Caco-2 (cell line): ENCODE measurements at regions of chr10 and their contacts with region 1.

Region 1: DNA sequence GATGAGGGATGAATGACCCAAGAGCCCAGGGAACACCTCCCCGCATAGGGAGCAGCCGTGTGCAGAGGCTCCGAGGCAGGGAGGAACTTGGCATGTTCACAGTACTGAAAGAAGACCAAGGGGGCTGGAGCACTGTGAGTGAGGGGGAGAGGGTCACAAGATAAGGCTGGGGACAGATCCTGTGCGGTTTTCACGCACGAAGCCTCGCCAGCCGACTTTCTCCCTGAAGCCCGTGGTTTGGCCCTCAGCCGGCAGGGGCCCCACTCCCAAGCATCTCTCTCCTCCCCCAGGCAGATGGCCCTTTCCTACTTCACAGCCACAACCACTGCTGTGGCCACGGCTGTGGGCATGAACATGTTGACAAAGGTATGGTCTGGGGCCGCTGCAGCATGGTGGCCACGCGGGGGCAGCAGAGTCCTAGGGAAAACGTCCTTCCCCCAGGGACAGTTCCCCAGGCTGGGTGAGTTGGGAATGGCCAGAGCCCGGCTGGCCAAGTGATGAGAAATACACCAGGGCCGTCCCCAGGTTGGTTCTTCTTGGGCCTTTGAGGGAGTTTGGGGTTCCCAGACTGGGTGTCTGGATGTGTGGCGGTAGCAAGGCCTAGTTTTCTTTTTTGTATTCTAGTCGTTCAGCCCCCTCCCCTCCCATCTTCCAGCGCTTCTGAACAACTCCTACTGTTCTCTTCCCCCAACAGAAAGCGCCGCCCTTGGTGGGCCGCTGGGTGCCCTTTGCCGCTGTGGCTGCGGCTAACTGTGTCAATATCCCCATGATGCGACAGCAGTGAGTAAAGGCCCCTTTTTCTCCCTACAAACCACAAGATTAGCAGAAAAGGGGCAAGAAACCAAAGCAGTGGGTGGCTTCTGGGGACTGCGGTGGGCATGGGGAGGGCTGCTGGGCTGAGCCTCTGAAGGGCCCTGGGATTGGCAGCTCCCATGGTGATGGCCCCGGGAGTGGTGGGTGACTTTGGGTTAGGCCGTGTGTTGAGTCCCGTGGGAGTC is 14.4 kb upstream of the WBP1L start:
- DNase-seq: peak; percentile 77 to 88
- H3K4me3 ChIP-seq: no peak overlapping the region
- H3K4me3 Mint-ChIP-seq: no peak overlapping the region
- H3K27ac Mint-ChIP-seq: peak overlapping the region; percentile 5
- H3K4me1 ChIP-seq: no peaks in the 10 kb centered on the region
- H3K4me1 Mint-ChIP-seq: no peaks in the 10 kb centered on the region
- H3K27me3 ChIP-seq: no peaks in the 10 kb centered on the region
- H3K27me3 Mint-ChIP-seq: no peaks in the 10 kb centered on the region
- CTCF ChIP-seq: peak; percentile 91 to 95

Region 2: DNA sequence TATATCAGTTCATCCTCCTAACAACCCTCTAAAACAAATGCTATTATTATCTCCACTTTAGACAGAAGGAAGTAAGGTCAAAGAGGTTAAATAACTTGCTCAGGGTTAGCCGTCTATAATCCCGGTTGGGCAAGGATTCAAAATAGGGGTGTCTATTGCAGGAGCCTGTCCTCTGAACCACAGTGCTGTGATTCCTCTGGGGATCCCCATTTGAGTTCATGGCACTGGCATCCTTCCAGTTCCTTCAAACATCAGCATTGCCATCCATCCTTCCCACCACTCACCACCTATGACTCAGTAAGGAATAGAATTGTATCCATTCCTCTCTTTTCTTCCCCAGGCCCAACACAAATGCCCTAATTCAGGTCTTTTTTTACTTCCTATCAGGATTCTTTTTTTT is 638.6 kb before region 1 on chr10:
- CTCF ChIA-PET with region 1: no interaction called
- POLR2A ChIA-PET with region 1: no interaction called
- intact Hi-C with region 1: no loop called
- DNase-seq: no peak
- H3K4me3 ChIP-seq: no peak overlapping the region
- H3K4me3 Mint-ChIP-seq: no peak overlapping the region
- H3K27ac Mint-ChIP-seq: no peak overlapping the region
- H3K4me1 ChIP-seq: no peaks in the 10 kb centered on the region
- H3K4me1 Mint-ChIP-seq: no peaks in the 10 kb centered on the region
- H3K27me3 ChIP-seq: no peaks in the 10 kb centered on the region
- H3K27me3 Mint-ChIP-seq: no peaks in the 10 kb centered on the region
- CTCF ChIP-seq: no peak

Region 3: GRCh38 chr10:102691285-102692066 is 37.9 kb before region 1 on chr10:
- CTCF ChIA-PET with region 1: no interaction called
- POLR2A ChIA-PET with region 1: no interaction called
- intact Hi-C with region 1: no loop called
- DNase-seq: no peak
- H3K4me3 ChIP-seq: no peak overlapping the region
- H3K4me3 Mint-ChIP-seq: no peak overlapping the region
- H3K27ac Mint-ChIP-seq: no peak overlapping the region
- H3K4me1 ChIP-seq: no peaks in the 10 kb centered on the region
- H3K4me1 Mint-ChIP-seq: no peaks in the 10 kb centered on the region
- H3K27me3 ChIP-seq: no peaks in the 10 kb centered on the region
- H3K27me3 Mint-ChIP-seq: no peaks in the 10 kb centered on the region
- CTCF ChIP-seq: no peak

Region 4: GRCh38 chr10:102869258-102870198 is 140.2 kb after region 1 on chr10 and contains the start of gene AS3MT:
- CTCF ChIA-PET with region 1: no interaction called
- POLR2A ChIA-PET with region 1: no interaction called
- intact Hi-C with region 1: no loop called
- DNase-seq: peak; percentile 86 to 87
- H3K4me3 ChIP-seq: peak within 1 kb of the TSS; percentile 50
- H3K4me3 Mint-ChIP-seq: peak within 1 kb of the TSS; percentile 78
- H3K27ac Mint-ChIP-seq: peak within 1 kb of the TSS; percentile 40
- H3K4me1 ChIP-seq: peaks cover 6% of the 10 kb centered on the region; the same call in 1 of the 2 replicates
- H3K4me1 Mint-ChIP-seq: peaks cover 9% of the 10 kb centered on the region
- H3K27me3 ChIP-seq: no peaks in the 10 kb centered on the region
- H3K27me3 Mint-ChIP-seq: no peaks in the 10 kb centered on the region
- CTCF ChIP-seq: no peak
- total RNA-seq, gene AS3MT: 6.4 and 8.6 TPM in 2 replicates

Region 5: DNA sequence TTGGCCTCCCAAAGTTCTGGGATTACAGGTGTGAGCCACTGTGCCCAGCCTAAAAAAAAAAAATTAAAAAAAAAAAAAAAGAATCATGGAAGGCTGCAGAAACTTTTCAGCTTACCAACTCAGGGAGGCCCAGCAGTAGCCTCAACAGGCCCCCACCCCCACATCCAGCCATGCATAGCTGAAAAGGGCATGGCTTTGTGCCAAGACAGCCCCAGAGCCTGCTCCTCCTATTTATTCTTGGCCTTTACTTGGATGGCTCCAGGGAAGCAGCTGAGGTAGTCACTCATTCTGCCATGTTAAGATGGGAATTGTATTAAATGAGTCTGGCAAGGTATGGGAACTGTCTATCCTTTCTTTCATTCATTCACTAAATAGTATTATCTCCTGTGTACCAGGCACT is 175.0 kb after region 1 on chr10:
- CTCF ChIA-PET with region 1: no interaction called
- POLR2A ChIA-PET with region 1: no interaction called
- intact Hi-C with region 1: loop called (anchors 1 kb)
- DNase-seq: no peak
- H3K4me3 ChIP-seq: no peak overlapping the region
- H3K4me3 Mint-ChIP-seq: no peak overlapping the region
- H3K27ac Mint-ChIP-seq: no peak overlapping the region
- H3K4me1 ChIP-seq: no peaks in the 10 kb centered on the region
- H3K4me1 Mint-ChIP-seq: no peaks in the 10 kb centered on the region
- H3K27me3 ChIP-seq: no peaks in the 10 kb centered on the region
- H3K27me3 Mint-ChIP-seq: no peaks in the 10 kb centered on the region
- CTCF ChIP-seq: no peak

Region 6: DNA sequence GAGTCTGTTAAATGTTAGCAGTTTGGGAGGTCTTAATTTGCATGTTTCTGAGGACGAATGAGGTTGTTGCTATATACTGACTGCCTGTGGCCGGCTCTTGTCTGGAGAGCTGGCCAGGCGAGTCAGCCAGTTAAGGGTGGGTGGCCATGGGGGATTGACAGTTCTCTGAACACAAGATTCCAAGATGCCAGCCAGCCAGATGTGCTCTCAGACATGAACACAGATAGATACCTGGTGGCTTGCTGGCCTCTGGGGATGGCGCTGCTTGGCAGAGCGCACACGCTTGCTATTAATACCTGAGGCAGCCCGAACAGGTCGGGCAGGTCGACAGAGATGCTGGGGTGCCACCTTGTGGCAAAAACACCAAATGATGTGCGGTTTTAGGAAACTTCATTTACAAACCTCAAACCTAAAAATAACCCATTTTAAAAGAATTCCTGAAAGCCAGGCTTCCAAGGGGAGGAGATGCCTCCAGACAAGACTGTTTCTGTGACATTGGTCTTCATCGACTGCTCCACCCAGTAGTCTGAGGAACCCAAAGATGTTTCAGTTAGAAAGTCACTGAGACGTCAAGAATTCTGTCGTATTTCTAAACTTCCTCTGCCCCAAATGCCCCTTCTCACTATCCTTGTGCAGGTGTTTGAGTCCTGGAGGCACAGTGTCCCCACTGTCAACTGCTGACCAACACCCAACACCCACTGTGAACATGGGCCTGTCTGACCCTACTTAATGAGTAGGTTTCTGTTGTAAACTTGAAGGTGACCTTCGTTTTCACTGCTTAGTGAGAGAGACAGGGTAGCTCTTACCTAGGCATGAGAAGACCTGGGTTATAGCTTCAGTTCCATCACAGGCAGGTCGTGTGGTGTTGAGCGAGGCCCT is 340.4 kb after region 1 on chr10:
- CTCF ChIA-PET with region 1: no interaction called
- POLR2A ChIA-PET with region 1: no interaction called
- intact Hi-C with region 1: loop called (anchors 2 kb)
- DNase-seq: peak; percentile 65 to 78
- H3K4me3 ChIP-seq: no peak overlapping the region
- H3K4me3 Mint-ChIP-seq: no peak overlapping the region
- H3K27ac Mint-ChIP-seq: no peak overlapping the region
- H3K4me1 ChIP-seq: peaks cover 3% of the 10 kb centered on the region; the same call in 1 of the 2 replicates
- H3K4me1 Mint-ChIP-seq: no peaks in the 10 kb centered on the region
- H3K27me3 ChIP-seq: no peaks in the 10 kb centered on the region
- H3K27me3 Mint-ChIP-seq: no peaks in the 10 kb centered on the region
- CTCF ChIP-seq: peak; percentile 77 to 78